Left lung (tissue), 14 donors: ENCODE measurements at regions of chr11 and their contacts with region 1.

Region 1: DNA sequence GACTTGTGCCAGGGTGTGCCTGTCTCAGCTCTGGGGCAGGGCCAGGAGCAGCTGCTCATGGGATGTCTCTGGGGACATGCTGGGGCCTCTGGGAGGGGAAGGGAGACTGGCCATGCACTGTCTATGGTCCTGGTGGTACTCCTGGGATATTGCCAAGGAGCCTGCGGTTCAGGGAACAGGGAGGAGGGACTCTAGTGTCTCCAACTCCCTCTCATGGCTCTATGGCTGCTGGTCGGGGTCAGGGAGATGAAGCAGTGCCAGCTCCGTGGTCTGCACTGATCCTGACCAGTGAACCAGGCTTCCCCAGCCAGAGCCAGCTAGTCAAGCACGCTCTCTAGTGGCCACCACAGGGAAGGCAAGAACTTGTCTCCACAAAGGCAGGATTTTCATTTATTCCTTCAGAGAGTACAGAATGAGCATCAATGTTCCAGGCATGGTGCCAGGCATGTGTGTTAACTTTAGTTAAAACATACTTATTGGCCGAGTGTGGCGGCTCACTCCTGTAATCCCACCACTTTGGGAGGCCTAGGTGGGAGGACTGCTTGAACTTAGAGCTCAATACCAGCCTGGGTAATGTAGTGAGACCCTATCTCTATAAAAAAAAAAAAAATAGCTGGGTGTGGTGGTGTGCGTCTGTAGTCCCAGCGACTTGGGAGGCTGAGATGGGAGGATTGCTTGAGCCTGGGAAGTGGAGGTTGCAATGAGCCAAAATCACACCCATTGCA is 2.5 kb upstream of the BEST1 start:
- DNase-seq: peak in 3 of 4 donors; percentile 78 to 90 (median 85)
- ATAC-seq: peak; percentile 93
- H3K4me3 ChIP-seq: no peak overlapping the region
- H3K27ac ChIP-seq: no peak overlapping the region
- H3K4me1 ChIP-seq: peaks cover 0 to 26% of the 10 kb centered on the region in 2 donors
- H3K27me3 ChIP-seq: no peaks in the 10 kb centered on the region
- CTCF ChIP-seq: peak; percentile 79 to 87

Region 2: DNA sequence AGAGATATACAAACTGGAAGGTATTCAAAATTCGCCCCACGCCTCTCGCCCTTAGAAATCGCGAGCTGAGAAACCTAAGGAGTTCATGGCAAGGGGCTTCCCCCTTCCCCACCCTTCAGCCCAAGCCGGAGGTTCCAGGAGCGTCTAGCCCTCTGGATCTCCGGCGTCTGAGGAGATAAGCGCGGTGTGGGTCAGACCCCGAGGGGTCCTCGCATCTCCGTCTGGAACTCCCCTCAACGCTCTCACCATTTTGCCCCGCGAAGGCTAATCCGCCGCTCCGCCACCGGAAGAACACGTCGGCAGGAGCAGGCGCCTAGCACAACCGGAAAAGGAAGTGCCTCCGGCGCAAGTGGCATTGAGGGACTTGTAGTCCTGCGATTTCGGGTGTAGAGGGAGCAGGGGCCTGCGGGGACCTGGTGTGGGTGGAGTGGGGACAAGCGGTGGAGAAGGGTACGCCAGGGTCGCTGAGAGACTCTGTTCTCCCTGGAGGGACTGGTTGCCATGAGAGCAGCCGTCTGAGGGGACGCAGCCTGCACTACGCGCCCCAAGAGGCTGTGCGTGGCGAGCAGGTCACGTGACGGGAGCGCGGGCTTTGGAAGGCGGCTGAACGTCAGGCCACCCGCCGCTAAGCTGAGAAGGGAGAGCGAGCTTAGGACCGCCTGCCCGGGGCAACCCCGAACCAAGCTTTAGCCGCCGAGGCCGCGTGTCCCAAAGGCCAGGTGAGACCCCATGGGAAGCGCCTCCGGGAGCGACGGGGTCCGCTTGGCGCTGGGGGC is 155.2 kb before region 1 on chr11 and contains the starts of genes FEN1 and TMEM258:
- intact Hi-C with region 1: loop called in 1 of 2 experiments (anchors 10 kb)
- DNase-seq: peak; percentile 92 to 99 (median 95)
- ATAC-seq: peak; percentile 92
- H3K4me3 ChIP-seq: peak within 1 kb of the TSS; percentile 59 to 68
- H3K27ac ChIP-seq: peak within 1 kb of the TSS; percentile 89 to 95
- H3K4me1 ChIP-seq: peaks cover 15 to 36% of the 10 kb centered on the region in 2 donors
- H3K27me3 ChIP-seq: no peaks in the 10 kb centered on the region
- CTCF ChIP-seq: peak in 1 of 2 donors; percentile 26
- polyA plus RNA-seq, gene FEN1: 24.6 to 42.4 (median 27.3) TPM
- polyA plus RNA-seq, gene TMEM258: 150 to 185 (median 168) TPM

Region 3: DNA sequence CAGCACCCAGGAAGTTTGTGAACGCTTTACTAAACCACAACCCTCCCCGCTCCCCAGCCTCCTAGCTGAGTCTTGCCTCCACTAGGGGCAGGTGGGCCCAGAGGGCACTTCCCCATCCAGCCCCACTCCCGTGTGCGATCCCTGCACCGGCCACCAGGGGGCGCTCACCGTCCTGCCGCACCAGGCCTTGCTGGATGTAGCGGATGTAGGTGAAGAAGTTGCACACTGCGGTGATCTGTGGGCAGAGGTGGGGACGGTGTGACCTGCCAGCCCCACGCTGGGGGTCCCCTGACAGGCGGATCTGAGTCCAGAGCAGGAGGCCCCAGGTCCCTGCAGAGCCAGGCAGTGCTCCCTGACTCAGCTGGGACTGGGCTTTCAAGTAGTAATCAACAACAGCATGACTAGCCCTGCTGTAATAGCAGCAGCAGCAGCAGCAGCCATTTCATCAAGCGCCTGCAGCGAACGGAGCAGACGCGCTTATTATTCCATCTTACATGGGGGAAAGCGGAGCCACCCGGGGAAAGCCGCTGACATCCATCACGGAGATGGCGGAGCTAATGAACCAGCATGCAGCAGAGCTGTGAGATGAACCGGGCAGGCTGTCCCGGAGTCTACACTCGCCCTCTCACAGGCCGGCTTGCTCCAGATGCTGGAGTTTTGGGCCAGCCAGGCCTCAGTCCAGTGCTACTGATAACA is 48.4 kb before region 1 on chr11:
- intact Hi-C with region 1: loop called in 1 of 2 experiments (anchors 5 kb)
- DNase-seq: peak; percentile 64 to 99 (median 81)
- ATAC-seq: peak; percentile 91
- H3K4me3 ChIP-seq: no peak overlapping the region
- H3K27ac ChIP-seq: no peak overlapping the region
- H3K4me1 ChIP-seq: peaks cover 0 to 18% of the 10 kb centered on the region in 2 donors
- H3K27me3 ChIP-seq: no peaks in the 10 kb centered on the region
- CTCF ChIP-seq: peak; percentile 100

Region 4: GRCh38 chr11:62069986-62070919 is 122.6 kb after region 1 on chr11:
- intact Hi-C with region 1: loop called in 1 of 2 experiments (anchors 10 kb)
- DNase-seq: no peak
- ATAC-seq: no peak
- H3K4me3 ChIP-seq: no peak overlapping the region
- H3K27ac ChIP-seq: no peak overlapping the region
- H3K4me1 ChIP-seq: no peaks in the 10 kb centered on the region
- H3K27me3 ChIP-seq: no peaks in the 10 kb centered on the region
- CTCF ChIP-seq: no peak

Region 5: GRCh38 chr11:62306227-62306626 is 358.6 kb after region 1 on chr11:
- intact Hi-C with region 1: no loop called
- DNase-seq: peak in 1 of 4 donors; percentile 12
- ATAC-seq: no peak
- H3K4me3 ChIP-seq: no peak overlapping the region
- H3K27ac ChIP-seq: no peak overlapping the region
- H3K4me1 ChIP-seq: peaks cover 0 to 3% of the 10 kb centered on the region in 2 donors
- H3K27me3 ChIP-seq: peaks cover 0 to 38% of the 10 kb centered on the region in 2 donors
- CTCF ChIP-seq: no peak